ENCODE measurements at regions of chr4 and their contacts with region 1.

Region 1: GRCh38 chr4:143482840-143483239 is 30.7 kb upstream of the SMARCA5 start:
- DNase-seq: peak; percentile 16
- ATAC-seq: no peak
- H3K4me3 ChIP-seq: no peak overlapping the region
- H3K27ac ChIP-seq: no peak overlapping the region
- H3K4me1 ChIP-seq: no peaks in the 10 kb centered on the region
- H3K27me3 ChIP-seq: no peaks in the 10 kb centered on the region
- CTCF ChIP-seq: peak; percentile 63
- EP300 ChIP-seq: no peak
- POLR2A ChIP-seq: no peak
- RAD21 ChIP-seq: peak; percentile 42; the same call in 1 of the 2 replicates

Region 2: GRCh38 chr4:143127621-143128020 is 355.2 kb before region 1 on chr4:
- CTCF ChIA-PET with region 1: no interaction called
- POLR2A ChIA-PET with region 1: no interaction called
- in situ Hi-C with region 1: no loop called
- intact Hi-C with region 1: no loop called
- DNase-seq: no peak
- ATAC-seq: no peak
- H3K4me3 ChIP-seq: no peak overlapping the region
- H3K27ac ChIP-seq: no peak overlapping the region
- H3K4me1 ChIP-seq: no peaks in the 10 kb centered on the region
- H3K27me3 ChIP-seq: no peaks in the 10 kb centered on the region
- CTCF ChIP-seq: no peak
- EP300 ChIP-seq: no peak
- POLR2A ChIP-seq: no peak
- RAD21 ChIP-seq: no peak

Region 3: GRCh38 chr4:143207557-143207956 is 275.3 kb before region 1 on chr4:
- CTCF ChIA-PET with region 1: interaction called, 8 read pairs
- POLR2A ChIA-PET with region 1: no interaction called
- in situ Hi-C with region 1: loop called (anchors 10 kb)
- intact Hi-C with region 1: loop called (anchors 2 kb)
- DNase-seq: peak; percentile 20
- ATAC-seq: peak; percentile 67; the same call in 2 of the 3 replicates
- H3K4me3 ChIP-seq: no peak overlapping the region
- H3K27ac ChIP-seq: no peak overlapping the region
- H3K4me1 ChIP-seq: no peaks in the 10 kb centered on the region
- H3K27me3 ChIP-seq: no peaks in the 10 kb centered on the region; a peak in 1 of 5 replicates
- CTCF ChIP-seq: peak; percentile 37
- EP300 ChIP-seq: no peak
- POLR2A ChIP-seq: no peak
- RAD21 ChIP-seq: no peak

Region 4: DNA sequence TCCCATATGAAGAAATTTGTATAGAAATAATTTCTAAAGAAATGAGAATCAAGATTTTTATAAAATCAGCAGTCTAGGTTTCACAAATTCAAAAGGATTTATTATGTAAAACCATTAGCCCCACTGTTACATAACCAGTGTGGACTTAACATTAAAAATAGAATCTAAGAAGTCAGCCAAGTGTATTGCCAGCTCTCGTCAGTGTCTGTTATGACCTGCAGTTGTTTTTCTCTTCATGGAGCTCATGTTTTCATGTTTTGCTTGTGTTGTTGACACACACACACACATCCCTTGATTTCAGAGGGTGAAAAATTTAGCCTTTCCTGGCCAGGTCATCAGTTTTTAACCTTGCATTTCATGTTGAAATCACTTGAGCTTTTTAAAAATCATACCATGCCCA is 258.6 kb before region 1 on chr4:
- CTCF ChIA-PET with region 1: no interaction called
- POLR2A ChIA-PET with region 1: no interaction called
- in situ Hi-C with region 1: no loop called
- intact Hi-C with region 1: no loop called
- DNase-seq: no peak
- ATAC-seq: no peak
- H3K4me3 ChIP-seq: peak overlapping the region in 2 of 3 experiments; percentile 19 to 23; a peak in 1 of 6 replicates
- H3K27ac ChIP-seq: peak overlapping the region; percentile 68
- H3K4me1 ChIP-seq: peaks cover 31% of the 10 kb centered on the region
- H3K27me3 ChIP-seq: no peaks in the 10 kb centered on the region
- CTCF ChIP-seq: no peak
- EP300 ChIP-seq: no peak
- POLR2A ChIP-seq: no peak
- RAD21 ChIP-seq: no peak

Region 5: GRCh38 chr4:143375313-143376073 is 107.3 kb before region 1 on chr4:
- CTCF ChIA-PET with region 1: interaction called, 6 read pairs
- POLR2A ChIA-PET with region 1: no interaction called
- in situ Hi-C with region 1: no loop called
- intact Hi-C with region 1: loop called (anchors 2 kb)
- DNase-seq: peak; percentile 17
- ATAC-seq: peak; percentile 77
- H3K4me3 ChIP-seq: no peak overlapping the region
- H3K27ac ChIP-seq: no peak overlapping the region
- H3K4me1 ChIP-seq: peaks cover 45% of the 10 kb centered on the region
- H3K27me3 ChIP-seq: no peaks in the 10 kb centered on the region
- CTCF ChIP-seq: peak; percentile 59
- EP300 ChIP-seq: no peak
- POLR2A ChIP-seq: no peak
- RAD21 ChIP-seq: 0 out of 2 replicates have a peak, but pooled peaks have one; percentile 24

Measured in HepG2 (cell line).